ENCODE measurements at regions of chr7 and their contacts with region 1.

Region 1: GRCh38 chr7:44131173-44132029 is 8.1 kb upstream of the POLD2 start:
- DNase-seq: no peak
- ATAC-seq: peak; percentile 84
- H3K4me3 ChIP-seq: no peak overlapping the region
- H3K27ac ChIP-seq: no peak overlapping the region
- H3K4me1 ChIP-seq: peaks cover 12% of the 10 kb centered on the region
- H3K27me3 ChIP-seq: no peaks in the 10 kb centered on the region
- CTCF ChIP-seq: peak; percentile 78; the same call in 1 of the 2 replicates

Region 2: GRCh38 chr7:43768201-43768886 is 363.1 kb before region 1 on chr7:
- CTCF ChIA-PET with region 1: no interaction called
- POLR2A ChIA-PET with region 1: no interaction called
- in situ Hi-C with region 1: no loop called
- intact Hi-C with region 1: no loop called
- DNase-seq: no peak
- ATAC-seq: no peak
- H3K4me3 ChIP-seq: no peak overlapping the region
- H3K27ac ChIP-seq: no peak overlapping the region
- H3K4me1 ChIP-seq: peaks cover 31% of the 10 kb centered on the region
- H3K27me3 ChIP-seq: no peaks in the 10 kb centered on the region
- CTCF ChIP-seq: no peak

Region 3: DNA sequence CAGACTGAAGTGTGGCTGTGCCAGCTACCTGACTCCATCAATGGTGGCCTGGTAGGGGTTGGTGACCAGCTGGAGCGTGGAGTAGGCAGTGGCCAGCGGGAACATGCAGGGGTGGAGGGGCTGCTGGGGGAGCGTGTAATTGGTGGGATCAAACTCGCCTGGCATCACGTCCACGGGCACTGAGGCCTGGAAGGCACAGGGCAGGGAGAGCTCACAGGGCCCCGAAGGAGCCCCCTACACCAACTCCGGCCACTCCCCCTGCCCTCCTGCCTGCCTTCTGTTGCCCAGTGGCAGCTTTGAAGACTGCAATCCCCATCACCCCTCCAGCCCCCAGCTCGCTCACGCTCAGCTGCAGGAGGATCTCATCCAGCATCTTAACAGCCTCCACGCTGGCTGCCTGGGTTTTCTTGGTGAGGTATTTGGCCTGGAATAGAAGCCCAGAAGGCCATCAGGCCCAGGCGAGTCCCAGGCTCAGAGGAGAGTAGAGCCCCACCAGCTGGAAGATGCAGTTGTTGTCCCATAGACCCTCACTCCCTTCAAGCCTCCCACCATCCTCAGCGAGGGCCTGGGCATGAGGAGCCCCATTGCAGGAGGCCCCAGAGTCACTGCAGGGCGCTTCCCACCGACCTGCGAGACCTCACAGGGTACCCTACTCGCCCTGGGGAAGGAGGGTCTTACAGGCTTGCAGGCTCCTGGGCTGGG is 15.2 kb before region 1 on chr7:
- CTCF ChIA-PET with region 1: no interaction called
- POLR2A ChIA-PET with region 1: interaction called, 10 read pairs
- in situ Hi-C with region 1: no loop called
- intact Hi-C with region 1: no loop called
- DNase-seq: no peak
- ATAC-seq: no peak
- H3K4me3 ChIP-seq: no peak overlapping the region
- H3K27ac ChIP-seq: no peak overlapping the region
- H3K4me1 ChIP-seq: no peaks in the 10 kb centered on the region; the same call in 1 of the 2 replicates
- H3K27me3 ChIP-seq: no peaks in the 10 kb centered on the region
- CTCF ChIP-seq: no peak

Region 4: GRCh38 chr7:44145969-44146911 is 14.8 kb after region 1 on chr7:
- CTCF ChIA-PET with region 1: no interaction called
- POLR2A ChIA-PET with region 1: no interaction called
- in situ Hi-C with region 1: no loop called
- intact Hi-C with region 1: no loop called
- DNase-seq: no peak
- ATAC-seq: peak; percentile 51
- H3K4me3 ChIP-seq: peak overlapping the region; percentile 23 to 30; a peak in 2 of 4 replicates
- H3K27ac ChIP-seq: no peak overlapping the region
- H3K4me1 ChIP-seq: no peaks in the 10 kb centered on the region
- H3K27me3 ChIP-seq: no peaks in the 10 kb centered on the region
- CTCF ChIP-seq: no peak